Activated naive CD4-positive, alpha-beta T cell treated with anti-CD3 and anti-CD28 coated beads for 36 hours (primary cell): ENCODE measurements at regions of chr10 and their contacts with region 1.

Region 1: DNA sequence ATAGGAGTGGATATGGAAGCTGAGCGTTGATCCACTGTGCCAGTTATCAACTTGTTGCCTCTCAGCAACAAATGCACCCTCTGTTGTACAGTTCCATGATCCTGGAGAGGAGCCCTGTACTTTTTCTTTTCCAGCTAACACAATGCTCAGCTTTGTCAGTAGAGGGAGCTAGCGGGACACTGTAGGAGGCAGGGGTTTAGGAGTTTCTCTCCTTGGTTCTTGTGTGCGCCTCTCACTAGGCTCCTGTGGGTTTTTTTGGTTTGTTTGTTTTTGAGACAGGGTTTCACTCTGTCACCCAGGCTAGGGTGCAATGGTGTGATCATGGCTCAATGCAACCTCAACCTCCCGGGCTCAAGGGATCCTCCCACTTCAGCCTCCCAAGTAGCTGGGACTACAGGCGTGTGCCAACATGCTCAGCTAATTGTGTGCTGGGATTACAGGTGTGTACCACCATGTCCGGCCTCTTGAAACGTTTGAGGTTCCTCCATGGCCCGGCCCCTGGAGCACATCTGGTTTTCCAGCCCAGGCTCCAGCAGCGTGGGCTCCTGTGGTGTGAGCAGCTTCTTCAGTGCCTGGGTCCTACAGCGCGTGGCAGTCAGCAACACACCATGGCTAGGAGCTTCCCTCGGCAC is 12.0 kb upstream of the MARVELD1 start:
- DNase-seq: peak; percentile 67
- H3K4me3 Mint-ChIP-seq: no peak overlapping the region
- H3K27ac Mint-ChIP-seq: no peak overlapping the region
- H3K4me1 Mint-ChIP-seq: no peaks in the 10 kb centered on the region
- H3K27me3 Mint-ChIP-seq: peaks cover 1% of the 10 kb centered on the region

Region 2: DNA sequence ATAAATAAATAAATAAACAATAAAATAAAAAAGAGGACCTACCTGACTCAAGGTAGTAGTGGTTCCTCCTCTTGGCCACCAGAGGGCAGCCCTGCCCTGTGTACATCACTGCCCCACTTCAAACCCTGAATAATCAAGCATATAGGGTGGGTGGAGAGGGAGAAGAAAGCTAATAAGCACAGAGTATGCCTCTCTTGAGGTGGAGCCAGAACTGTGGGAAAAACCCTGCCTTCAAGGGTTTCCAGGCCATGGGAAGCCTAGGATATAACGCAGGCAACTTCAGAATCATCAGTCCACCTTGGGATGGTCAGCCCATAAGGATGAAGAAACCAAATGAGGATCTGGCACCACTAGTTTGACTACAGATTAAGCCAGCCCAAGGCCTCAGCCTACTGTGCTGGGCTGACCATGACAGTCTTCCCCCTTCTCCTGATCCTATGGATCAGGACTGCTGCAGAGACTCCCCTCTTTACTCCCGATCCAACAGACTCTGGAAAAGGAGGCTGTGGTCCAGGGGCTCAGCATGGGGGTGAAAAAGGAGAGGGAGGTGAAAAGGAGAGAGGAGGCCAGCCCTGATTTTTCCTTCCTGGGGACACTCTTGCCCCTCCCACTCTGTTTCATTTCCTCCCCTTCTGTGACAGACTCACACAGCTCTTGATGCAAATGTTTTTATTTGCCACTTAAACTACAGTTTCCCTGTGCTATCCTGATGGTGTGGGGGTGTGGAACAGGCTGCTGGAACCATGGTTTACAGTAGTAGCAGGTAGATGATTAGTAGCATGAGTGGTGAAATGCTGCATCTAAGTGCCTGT is 24.6 kb before region 1 on chr10:
- CTCF ChIA-PET with region 1: interaction called, 12 read pairs
- intact Hi-C with region 1: loop called (anchors 1 kb)
- DNase-seq: peak; percentile 48
- H3K4me3 Mint-ChIP-seq: no peak overlapping the region
- H3K27ac Mint-ChIP-seq: no peak overlapping the region
- H3K4me1 Mint-ChIP-seq: no peaks in the 10 kb centered on the region
- H3K27me3 Mint-ChIP-seq: no peaks in the 10 kb centered on the region

Region 3: GRCh38 chr10:97714048-97714371 is 12.5 kb after region 1 on chr10:
- CTCF ChIA-PET with region 1: interaction called, 25 read pairs
- intact Hi-C with region 1: no loop called
- DNase-seq: peak; percentile 65
- H3K4me3 Mint-ChIP-seq: peak overlapping the region; percentile 94
- H3K27ac Mint-ChIP-seq: no peak overlapping the region
- H3K4me1 Mint-ChIP-seq: peaks cover 11% of the 10 kb centered on the region
- H3K27me3 Mint-ChIP-seq: peaks cover 17% of the 10 kb centered on the region

Region 4: GRCh38 chr10:97736902-97737769 is 35.6 kb after region 1 on chr10 and contains the start of gene ZFYVE27:
- CTCF ChIA-PET with region 1: interaction called, 178 read pairs
- intact Hi-C with region 1: no loop called
- DNase-seq: peak; percentile 98
- H3K4me3 Mint-ChIP-seq: peak within 1 kb of the TSS; percentile 92
- H3K27ac Mint-ChIP-seq: peak within 1 kb of the TSS; percentile 93
- H3K4me1 Mint-ChIP-seq: peaks cover 44% of the 10 kb centered on the region
- H3K27me3 Mint-ChIP-seq: no peaks in the 10 kb centered on the region
- total RNA-seq, gene ZFYVE27: 18.0 to 18.4 TPM

Region 5: GRCh38 chr10:97792141-97792721 is 90.7 kb after region 1 on chr10:
- CTCF ChIA-PET with region 1: interaction called, 7 read pairs
- intact Hi-C with region 1: loop called (anchors 10 kb)
- DNase-seq: peak; percentile 86
- H3K4me3 Mint-ChIP-seq: no peak overlapping the region
- H3K27ac Mint-ChIP-seq: no peak overlapping the region
- H3K4me1 Mint-ChIP-seq: peaks cover 28% of the 10 kb centered on the region
- H3K27me3 Mint-ChIP-seq: no peaks in the 10 kb centered on the region

Region 6: DNA sequence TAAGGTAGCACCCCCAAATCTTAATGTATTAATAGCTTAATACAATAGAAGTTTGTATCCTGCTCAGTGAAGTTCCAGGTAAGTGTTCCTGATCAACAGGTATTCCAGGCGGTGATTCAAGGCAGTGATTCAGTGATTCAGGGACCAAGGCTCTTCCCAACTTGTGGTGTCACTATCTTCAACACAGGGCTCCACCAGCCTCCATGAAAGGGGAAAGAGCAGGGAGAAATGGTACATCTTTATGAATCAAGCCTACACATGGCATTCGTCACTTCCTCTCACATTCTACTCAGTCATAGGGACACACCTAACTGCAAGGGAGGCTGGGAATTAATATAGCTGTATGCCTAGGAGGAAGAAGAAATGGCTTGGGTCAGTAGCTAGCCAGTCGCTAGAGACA is 153.2 kb after region 1 on chr10:
- CTCF ChIA-PET with region 1: no interaction called
- intact Hi-C with region 1: no loop called
- DNase-seq: no peak
- H3K4me3 Mint-ChIP-seq: no peak overlapping the region
- H3K27ac Mint-ChIP-seq: no peak overlapping the region
- H3K4me1 Mint-ChIP-seq: peaks cover 39% of the 10 kb centered on the region
- H3K27me3 Mint-ChIP-seq: no peaks in the 10 kb centered on the region